ENCODE measurements at regions of chr20 and their contacts with region 1.

Region 1: DNA sequence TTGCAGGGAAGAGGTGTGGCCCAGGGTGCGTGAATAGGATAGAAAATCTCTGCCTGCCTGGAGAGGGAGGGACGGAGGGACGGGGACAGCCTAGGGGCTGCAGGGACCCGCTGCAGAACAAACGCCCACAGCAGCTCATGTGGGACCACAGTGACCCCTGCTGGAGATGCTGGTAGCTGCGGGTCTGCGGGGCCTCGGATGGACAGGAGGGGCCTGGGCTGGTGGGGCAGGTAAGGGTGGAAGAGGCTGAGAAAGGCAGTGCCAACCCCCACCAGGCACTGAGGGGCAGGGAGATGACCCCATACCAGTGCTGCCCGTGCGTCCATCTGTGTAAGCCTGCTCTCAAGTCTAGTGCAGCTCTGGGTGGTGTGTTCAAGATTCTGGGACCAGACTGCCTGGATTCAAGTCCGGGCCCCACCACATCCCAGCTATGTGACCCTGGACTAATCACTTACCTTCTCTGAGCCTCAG is 39.4 kb downstream of the KIAA1755 start:
- DNase-seq: peak; percentile 91

Region 2: GRCh38 chr20:37564388-37565133 is 656.6 kb before region 1 on chr20:
- intact Hi-C with region 1: loop called in 1 of 2 experiments (anchors 10 kb)
- DNase-seq: peak; percentile 88

Region 3: GRCh38 chr20:37911838-37912281 is 309.3 kb before region 1 on chr20:
- intact Hi-C with region 1: loop called in 1 of 2 experiments (anchors 2 kb)
- DNase-seq: no peak

Region 4: GRCh38 chr20:38057351-38057972 is 163.7 kb before region 1 on chr20:
- intact Hi-C with region 1: loop called (anchors 2 to 5 kb)
- DNase-seq: peak; percentile 94

Region 5: GRCh38 chr20:38127011-38127621 is 94.0 kb before region 1 on chr20:
- intact Hi-C with region 1: no loop called
- DNase-seq: peak; percentile 79

Region 6: GRCh38 chr20:38165089-38165989 is 55.8 kb before region 1 on chr20 and contains the start of gene TGM2:
- intact Hi-C with region 1: loop called (anchors 2 to 5 kb)
- DNase-seq: peak; percentile 92
- total RNA-seq, gene TGM2: 442 to 500 TPM

Region 7: GRCh38 chr20:38173237-38174156 is 47.7 kb before region 1 on chr20:
- intact Hi-C with region 1: loop called in 1 of 2 experiments (anchors 5 kb)
- DNase-seq: peak; percentile 95

Region 8: DNA sequence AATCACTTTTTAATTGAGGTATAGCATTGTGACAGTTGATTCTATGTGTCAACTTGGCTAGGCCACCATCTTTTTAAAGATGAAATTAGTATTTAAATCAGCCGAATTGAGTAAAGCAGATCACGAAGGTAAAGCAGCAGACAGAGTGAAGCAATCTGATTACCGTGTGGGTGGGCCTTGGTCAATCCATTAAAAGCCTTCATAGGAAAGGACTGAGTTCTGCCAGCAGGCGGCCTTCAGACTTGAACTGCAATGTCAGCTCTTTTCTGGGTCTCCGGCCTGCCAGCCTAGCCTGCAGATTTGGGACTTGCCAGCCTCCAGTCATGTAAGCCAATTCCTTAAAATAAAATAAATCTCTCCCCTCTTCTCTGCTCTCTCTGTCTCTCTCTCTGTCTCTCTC is 33.6 kb before region 1 on chr20:
- intact Hi-C with region 1: no loop called
- DNase-seq: no peak

Region 9: DNA sequence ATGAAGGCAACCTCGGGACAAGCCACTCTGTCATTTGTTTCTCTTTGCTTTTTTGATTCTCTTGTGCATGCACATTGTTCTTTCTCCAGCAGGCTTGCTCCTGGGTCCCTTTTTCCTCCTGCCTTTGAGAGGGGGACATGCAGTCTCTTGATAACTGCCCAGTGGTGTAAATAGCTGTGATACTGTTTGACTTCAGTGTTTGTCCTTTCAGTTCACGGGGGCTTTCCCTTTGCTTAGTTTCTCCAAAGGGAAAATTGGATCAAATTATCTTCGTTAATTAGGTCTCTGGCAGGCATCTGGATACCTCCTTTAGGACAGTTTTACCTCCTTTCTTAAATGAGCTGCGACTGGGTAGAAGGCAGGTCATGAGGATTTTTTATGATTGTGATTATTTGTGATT is 293.0 kb after region 1 on chr20:
- intact Hi-C with region 1: no loop called
- DNase-seq: no peak

Measured in posterior vena cava (tissue), 2 donors.